ENCODE measurements at regions of chr16 and their contacts with region 1.

Region 1: DNA sequence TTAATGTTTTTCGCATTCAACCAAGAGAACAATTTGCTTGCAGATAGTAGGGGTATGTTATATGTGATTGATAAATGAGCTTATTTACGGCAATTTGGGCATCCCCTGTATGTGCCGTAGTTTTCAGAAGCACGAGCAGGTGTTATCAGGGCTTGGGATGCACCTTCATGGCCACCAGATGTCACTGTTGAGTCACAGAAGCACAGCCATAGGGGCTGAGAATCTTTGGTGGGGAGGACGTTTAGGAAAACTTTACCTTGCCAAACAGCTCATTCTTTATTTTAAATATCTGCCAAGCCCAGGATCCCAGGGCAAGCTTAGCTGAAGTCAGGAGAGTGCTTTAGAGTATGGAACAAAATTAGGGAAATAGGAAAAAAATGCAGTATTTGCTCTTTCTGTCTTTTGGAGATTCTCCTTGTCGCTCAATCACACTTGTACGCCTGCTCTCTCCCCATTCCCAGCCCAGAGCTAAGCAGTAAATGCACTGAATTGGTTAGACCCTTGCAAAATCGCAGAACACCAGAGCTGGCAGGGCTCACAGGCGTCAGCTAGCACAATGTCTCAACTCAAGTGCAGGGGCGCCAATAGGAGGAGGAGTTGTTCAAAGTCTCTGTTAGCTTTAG is 93.6 kb upstream of the MPHOSPH6 start:
- DNase-seq: peak; percentile 58
- CTCF ChIP-seq: peak; percentile 92

Region 2: GRCh38 chr16:82331397-82331796 is 67.8 kb after region 1 on chr16:
- in situ Hi-C with region 1: no loop called
- DNase-seq: no peak
- CTCF ChIP-seq: no peak

Region 3: DNA sequence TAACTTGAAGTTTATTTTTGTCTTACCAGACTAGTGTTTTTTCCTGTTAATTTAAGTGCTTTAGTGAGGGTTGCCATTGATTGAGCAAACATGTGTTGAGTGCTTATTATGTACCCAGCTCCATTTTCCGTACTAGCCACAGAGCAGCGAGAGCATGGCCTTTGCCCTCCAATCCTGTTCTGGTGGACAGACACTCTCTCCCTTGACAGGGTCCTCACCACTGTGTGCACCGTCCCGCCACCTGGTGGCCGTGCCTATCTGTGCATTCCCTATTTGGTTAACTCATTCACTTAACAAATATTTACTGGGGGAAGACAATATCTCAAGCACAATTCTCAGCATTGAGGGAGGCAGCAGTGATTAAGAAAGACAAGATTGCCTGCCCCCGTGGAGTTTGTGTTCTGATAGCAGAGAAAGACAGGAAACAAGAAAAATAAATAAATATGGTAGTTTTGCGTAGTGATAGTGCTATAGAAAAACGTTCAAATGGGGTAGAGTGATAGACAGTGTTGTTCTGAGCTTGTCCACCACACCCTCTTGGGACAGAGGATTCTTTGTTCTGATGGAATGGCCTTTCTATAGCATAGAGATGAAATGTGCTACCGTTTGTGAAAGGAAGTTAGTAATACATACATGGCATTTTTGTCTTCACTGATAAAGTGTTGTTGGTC is 376.2 kb after region 1 on chr16:
- in situ Hi-C with region 1: loop called (anchors 25 kb)
- DNase-seq: no peak
- CTCF ChIP-seq: peak; percentile 86